GM12878 (cell line): ENCODE measurements at regions of chr7 and their contacts with region 1.

Region 1: DNA sequence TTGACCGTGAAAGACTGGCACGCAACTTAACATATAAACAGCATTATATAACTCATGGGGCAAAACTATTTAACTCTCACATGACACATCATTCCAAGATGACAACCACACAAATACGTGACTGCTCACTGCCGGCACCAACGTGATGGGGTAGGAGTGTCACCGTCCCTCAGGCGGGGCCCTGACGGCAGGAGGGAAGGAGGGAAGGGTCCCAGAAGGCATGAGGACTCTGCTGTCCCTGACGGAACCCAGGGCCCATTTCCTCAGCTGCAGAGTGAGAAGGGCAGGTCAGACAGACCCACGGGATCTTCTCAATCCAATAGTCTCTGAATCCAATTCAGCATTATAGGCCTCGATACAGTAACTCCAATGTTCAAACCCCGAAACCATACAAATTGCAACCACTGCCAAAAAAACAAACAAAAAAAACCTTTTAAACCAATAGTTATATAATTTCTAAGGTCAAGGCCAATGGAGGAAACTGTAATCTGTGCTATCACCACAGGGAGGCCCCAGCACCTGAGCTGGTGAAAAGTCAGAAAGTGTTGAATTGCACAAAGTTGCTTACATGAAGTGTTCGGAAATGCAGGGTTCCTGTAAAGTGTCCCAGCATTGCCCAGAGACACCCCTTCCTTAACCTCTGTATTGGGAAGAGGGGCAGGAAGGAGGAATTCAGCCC is 137.4 kb downstream of the TNS3 start:
- DNase-seq: no peak
- ATAC-seq: peak; percentile 64; the same call in 2 of the 3 replicates
- H3K4me3 ChIP-seq: no peak overlapping the region
- H3K27ac ChIP-seq: no peak overlapping the region
- H3K4me1 ChIP-seq: no peaks in the 10 kb centered on the region
- H3K27me3 ChIP-seq: no peaks in the 10 kb centered on the region; a peak in 1 of 4 replicates
- CTCF ChIP-seq: peak; percentile 43 to 72 (median 45); a peak in 5 of 6 replicates
- EP300 ChIP-seq: no peak
- POLR2A ChIP-seq: no peak
- RAD21 ChIP-seq: peak; percentile 83

Region 2: GRCh38 chr7:47277321-47277792 is 167.2 kb before region 1 on chr7:
- CTCF ChIA-PET with region 1: no interaction called
- POLR2A ChIA-PET with region 1: no interaction called
- RAD21 ChIA-PET with region 1: no interaction called
- SMC1A ChIA-PET with region 1: no interaction called
- in situ Hi-C with region 1: no loop called
- intact Hi-C with region 1: no loop called
- DNase-seq: no peak
- ATAC-seq: no peak
- H3K4me3 ChIP-seq: no peak overlapping the region
- H3K27ac ChIP-seq: no peak overlapping the region
- H3K4me1 ChIP-seq: no peaks in the 10 kb centered on the region
- H3K27me3 ChIP-seq: no peaks in the 10 kb centered on the region; a peak in 1 of 4 replicates
- CTCF ChIP-seq: no peak
- EP300 ChIP-seq: no peak
- POLR2A ChIP-seq: no peak
- RAD21 ChIP-seq: no peak

Region 3: DNA sequence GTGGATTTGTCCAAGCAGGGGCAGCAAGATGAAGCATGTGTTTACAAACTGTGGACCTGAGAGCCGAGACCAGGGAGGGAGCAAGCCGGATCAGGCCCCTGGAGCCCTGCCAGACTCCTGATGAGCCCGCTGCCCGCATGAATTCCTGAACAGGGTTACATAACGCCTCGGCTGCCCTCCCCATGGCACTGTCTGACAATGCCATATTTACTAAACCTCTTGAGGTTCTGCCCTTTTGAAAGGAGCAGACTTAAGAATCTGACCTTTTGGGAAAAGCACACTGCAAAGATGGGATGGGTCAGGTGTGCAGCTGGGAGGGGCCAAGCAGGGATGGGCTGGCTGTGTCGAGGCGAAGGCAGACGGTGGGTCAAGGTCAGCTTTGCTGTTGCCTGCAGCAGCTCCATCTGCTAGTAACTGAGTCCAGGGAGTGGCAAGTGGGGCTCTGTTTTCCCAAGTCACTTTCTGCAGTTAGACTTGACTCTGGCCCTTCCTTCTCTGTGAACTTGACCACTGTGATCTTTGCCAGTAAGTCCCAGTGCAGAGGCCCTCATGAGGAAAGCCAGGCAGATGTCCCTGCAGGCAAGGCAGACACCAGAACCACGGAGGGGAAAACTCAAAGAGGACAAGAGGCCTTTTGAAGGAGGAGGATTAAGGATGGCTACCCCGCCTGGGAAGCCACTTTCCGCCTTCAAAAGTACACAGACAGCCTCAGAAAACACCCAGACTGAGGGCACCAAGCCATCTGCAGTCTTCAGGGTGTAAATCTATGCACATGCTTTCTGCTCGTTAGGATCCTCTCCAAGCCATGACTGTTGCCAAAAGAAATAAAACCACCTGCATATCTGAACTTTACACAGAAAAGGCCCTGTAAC is 38.4 kb before region 1 on chr7:
- CTCF ChIA-PET with region 1: no interaction called
- POLR2A ChIA-PET with region 1: no interaction called
- RAD21 ChIA-PET with region 1: no interaction called
- SMC1A ChIA-PET with region 1: no interaction called
- in situ Hi-C with region 1: no loop called
- intact Hi-C with region 1: no loop called
- DNase-seq: no peak
- ATAC-seq: no peak
- H3K4me3 ChIP-seq: no peak overlapping the region
- H3K27ac ChIP-seq: no peak overlapping the region
- H3K4me1 ChIP-seq: no peaks in the 10 kb centered on the region
- H3K27me3 ChIP-seq: no peaks in the 10 kb centered on the region
- CTCF ChIP-seq: no peak
- EP300 ChIP-seq: no peak
- POLR2A ChIP-seq: no peak
- RAD21 ChIP-seq: no peak

Region 4: DNA sequence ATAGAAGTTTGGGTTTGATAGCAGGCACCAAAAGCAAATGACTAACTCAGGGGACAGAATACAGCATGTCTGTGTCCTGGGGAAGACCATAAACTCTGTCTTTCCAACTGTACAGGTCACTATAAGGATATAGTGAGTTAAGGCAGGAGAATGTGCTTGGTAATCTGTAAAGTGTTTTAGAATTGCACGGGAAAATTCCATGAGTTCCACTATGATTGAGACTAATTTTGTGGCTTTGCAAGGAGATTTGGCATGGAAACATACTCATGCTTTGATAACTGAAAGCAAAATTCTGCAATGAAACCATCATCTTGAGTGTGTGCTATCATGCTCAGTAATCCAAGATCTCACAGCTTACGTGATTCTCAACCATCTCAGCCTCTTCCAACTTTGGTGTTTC is 351.1 kb after region 1 on chr7:
- CTCF ChIA-PET with region 1: no interaction called
- POLR2A ChIA-PET with region 1: no interaction called
- RAD21 ChIA-PET with region 1: no interaction called
- SMC1A ChIA-PET with region 1: no interaction called
- in situ Hi-C with region 1: no loop called
- intact Hi-C with region 1: no loop called
- DNase-seq: no peak
- ATAC-seq: no peak
- H3K4me3 ChIP-seq: no peak overlapping the region
- H3K27ac ChIP-seq: no peak overlapping the region
- H3K4me1 ChIP-seq: no peaks in the 10 kb centered on the region
- H3K27me3 ChIP-seq: no peaks in the 10 kb centered on the region; a peak in 1 of 4 replicates
- CTCF ChIP-seq: no peak
- EP300 ChIP-seq: no peak
- POLR2A ChIP-seq: no peak
- RAD21 ChIP-seq: no peak

Region 5: GRCh38 chr7:47818796-47819606 is 374.5 kb after region 1 on chr7:
- CTCF ChIA-PET with region 1: interaction called, 6 read pairs
- POLR2A ChIA-PET with region 1: no interaction called
- RAD21 ChIA-PET with region 1: interaction called, 6 read pairs
- SMC1A ChIA-PET with region 1: interaction called, 6 read pairs
- in situ Hi-C with region 1: loop called (anchors 5 kb)
- intact Hi-C with region 1: loop called (anchors 1 kb)
- DNase-seq: peak; percentile 15
- ATAC-seq: peak; percentile 77
- H3K4me3 ChIP-seq: no peak overlapping the region
- H3K27ac ChIP-seq: no peak overlapping the region
- H3K4me1 ChIP-seq: no peaks in the 10 kb centered on the region
- H3K27me3 ChIP-seq: peaks cover 3% of the 10 kb centered on the region in 2 experiments; a peak in 2 of 4 replicates
- CTCF ChIP-seq: peak; percentile 88 to 95 (median 93)
- EP300 ChIP-seq: no peak
- POLR2A ChIP-seq: no peak
- RAD21 ChIP-seq: peak; percentile 99